ENCODE measurements at regions of chr7 and their contacts with region 1.

Region 1: GRCh38 chr7:16982640-16983350 is 101.0 kb upstream of the AGR3 start:
- DNase-seq: no peak
- ATAC-seq: peak; percentile 81
- H3K4me3 ChIP-seq: no peak overlapping the region
- H3K27ac ChIP-seq: no peak overlapping the region
- H3K4me1 ChIP-seq: no peaks in the 10 kb centered on the region
- H3K27me3 ChIP-seq: no peaks in the 10 kb centered on the region

Region 2: GRCh38 chr7:16801111-16801542 is 181.7 kb before region 1 on chr7:
- intact Hi-C with region 1: no loop called
- DNase-seq: no peak
- ATAC-seq: no peak
- H3K4me3 ChIP-seq: no peak overlapping the region
- H3K27ac ChIP-seq: no peak overlapping the region
- H3K4me1 ChIP-seq: no peaks in the 10 kb centered on the region
- H3K27me3 ChIP-seq: no peaks in the 10 kb centered on the region

Region 3: GRCh38 chr7:16926283-16926682 is 56.5 kb before region 1 on chr7:
- intact Hi-C with region 1: loop called in 1 of 2 experiments (anchors 5 kb)
- DNase-seq: peak in 1 of 2 donors; percentile 60
- ATAC-seq: peak; percentile 86
- H3K4me3 ChIP-seq: no peak overlapping the region
- H3K27ac ChIP-seq: no peak overlapping the region
- H3K4me1 ChIP-seq: no peaks in the 10 kb centered on the region
- H3K27me3 ChIP-seq: no peaks in the 10 kb centered on the region

Region 4: DNA sequence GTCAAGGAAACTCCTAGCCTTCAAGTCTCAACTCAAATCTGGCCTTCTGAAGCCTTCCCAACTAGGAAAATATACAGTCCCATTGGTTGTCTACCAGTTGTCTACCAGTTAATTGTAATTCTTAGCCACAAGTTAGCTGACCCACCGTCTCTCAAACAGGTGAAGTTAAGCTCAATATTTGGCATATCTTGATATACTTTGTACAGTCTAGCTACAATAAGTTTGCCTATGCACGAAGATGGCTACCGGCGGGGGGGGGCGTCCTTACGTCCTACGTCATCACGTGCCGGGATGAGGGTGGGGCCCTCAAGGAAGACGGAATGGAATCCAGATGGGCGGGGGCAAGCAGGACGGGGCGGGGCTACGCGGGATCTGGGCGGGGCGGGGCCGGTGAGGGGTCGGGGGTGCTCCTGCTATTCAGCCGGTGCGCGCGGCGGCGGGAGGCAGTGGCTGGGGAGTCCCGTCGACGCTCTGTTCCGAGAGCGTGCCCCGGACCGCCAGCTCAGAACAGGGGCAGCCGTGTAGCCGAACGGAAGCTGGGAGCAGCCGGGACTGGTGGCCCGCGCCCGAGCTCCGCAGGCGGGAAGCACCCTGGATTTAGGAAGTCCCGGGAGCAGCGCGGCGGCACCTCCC is 315.5 kb after region 1 on chr7 and contains the start of gene AHR:
- intact Hi-C with region 1: loop called (anchors 10 kb)
- DNase-seq: peak; percentile 95 to 98
- ATAC-seq: peak; percentile 94
- H3K4me3 ChIP-seq: peak within 1 kb of the TSS; percentile 11 to 88
- H3K27ac ChIP-seq: peak within 1 kb of the TSS; percentile 17 to 45
- H3K4me1 ChIP-seq: peaks cover 0 to 2% of the 10 kb centered on the region in 2 donors
- H3K27me3 ChIP-seq: peaks cover 0 to 2% of the 10 kb centered on the region in 2 donors
- total RNA-seq, gene AHR: 65.8 to 117 TPM

Region 5: GRCh38 chr7:17523813-17524741 is 541.3 kb after region 1 on chr7:
- intact Hi-C with region 1: loop called in 1 of 2 experiments (anchors 10 kb)
- DNase-seq: no peak
- ATAC-seq: peak; percentile 12
- H3K4me3 ChIP-seq: no peak overlapping the region
- H3K27ac ChIP-seq: no peak overlapping the region
- H3K4me1 ChIP-seq: peaks cover 0 to 3% of the 10 kb centered on the region in 2 donors
- H3K27me3 ChIP-seq: no peaks in the 10 kb centered on the region

Region 6: GRCh38 chr7:17640730-17641377 is 658.1 kb after region 1 on chr7:
- intact Hi-C with region 1: loop called (anchors 5 to 10 kb)
- DNase-seq: no peak
- ATAC-seq: no peak
- H3K4me3 ChIP-seq: no peak overlapping the region
- H3K27ac ChIP-seq: no peak overlapping the region
- H3K4me1 ChIP-seq: no peaks in the 10 kb centered on the region
- H3K27me3 ChIP-seq: no peaks in the 10 kb centered on the region

Region 7: GRCh38 chr7:17646253-17646956 is 663.6 kb after region 1 on chr7:
- intact Hi-C with region 1: loop called (anchors 5 to 10 kb)
- DNase-seq: no peak
- ATAC-seq: no peak
- H3K4me3 ChIP-seq: no peak overlapping the region
- H3K27ac ChIP-seq: no peak overlapping the region
- H3K4me1 ChIP-seq: no peaks in the 10 kb centered on the region
- H3K27me3 ChIP-seq: no peaks in the 10 kb centered on the region